ENCODE measurements at regions of chr2 and their contacts with region 1.

Region 1: DNA sequence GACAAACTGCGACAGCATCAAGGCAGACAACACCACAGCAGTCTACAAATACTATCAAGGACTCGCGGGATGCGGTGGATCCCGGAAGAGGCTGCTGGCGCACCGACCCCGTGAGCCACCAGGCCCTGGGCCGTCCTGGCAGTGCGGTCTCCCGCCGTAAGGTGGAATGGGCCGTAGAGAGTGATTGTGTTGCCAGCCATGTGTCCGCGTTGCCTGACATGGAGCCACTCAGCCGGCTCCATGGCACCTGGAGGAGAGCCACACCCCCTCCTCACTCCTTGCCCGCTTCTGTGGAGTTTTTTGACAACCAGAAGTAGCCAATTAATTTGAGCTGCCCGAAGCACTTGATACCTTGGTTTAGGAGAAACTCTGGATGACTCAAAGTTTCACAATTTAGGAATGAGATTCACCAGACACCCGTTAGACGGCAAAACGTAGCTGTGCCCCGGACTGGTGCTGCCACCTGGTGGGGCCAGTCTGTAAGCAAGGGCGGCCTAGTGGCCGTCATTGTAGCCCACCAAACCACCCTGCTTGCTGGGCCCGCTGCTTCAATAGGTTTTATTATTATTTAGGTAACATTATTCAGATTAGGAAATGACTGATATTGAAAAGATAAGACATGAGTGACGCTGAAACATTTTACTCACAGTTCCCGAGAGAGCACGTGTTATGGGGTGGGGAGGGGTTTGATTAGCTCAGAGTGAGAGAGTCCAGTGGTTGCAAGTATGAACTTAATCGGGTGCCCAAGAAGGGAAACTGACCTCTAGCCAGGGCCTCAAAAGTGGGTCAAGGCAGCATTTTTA is 10.2 kb upstream of the IMP4 start:
- DNase-seq: peak; percentile 88
- H3K4me3 ChIP-seq: peak overlapping the region in 2 of 4 donors; percentile 13 to 15
- H3K27ac ChIP-seq: no peak overlapping the region
- H3K4me1 ChIP-seq: peaks cover 0 to 12% (median 2%) of the 10 kb centered on the region in 4 donors
- H3K27me3 ChIP-seq: no peaks in the 10 kb centered on the region
- CTCF ChIP-seq: peak; percentile 70 to 88 (median 85)
- EP300 ChIP-seq: no peak
- POLR2A ChIP-seq: no peak

Region 2: DNA sequence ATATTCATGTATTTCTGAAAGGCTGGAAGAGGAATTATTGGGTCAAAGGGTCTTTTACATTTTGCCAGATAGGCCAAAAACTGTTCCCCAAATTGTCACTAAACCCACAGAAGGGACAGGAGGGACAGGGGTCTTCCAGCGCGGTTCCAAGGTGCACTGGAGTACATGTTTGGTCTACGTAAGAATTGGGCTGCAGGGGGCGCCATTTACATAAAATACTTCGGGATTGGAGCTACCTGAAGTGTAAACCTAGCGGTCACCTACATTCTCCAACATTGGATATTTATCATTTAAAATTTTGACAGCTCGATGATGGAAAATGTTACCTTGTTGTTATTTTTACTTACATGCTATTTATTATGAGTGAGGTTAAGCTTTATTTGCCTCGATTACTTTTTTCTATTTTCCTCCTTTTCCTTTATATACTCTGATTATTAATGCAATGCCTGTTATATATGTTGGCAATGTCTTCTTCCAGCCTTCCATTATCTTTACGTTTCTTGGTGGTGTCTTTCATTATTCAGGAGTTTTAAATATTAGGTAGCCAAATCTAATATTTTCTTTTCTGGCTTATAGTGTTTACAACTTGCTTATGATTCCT is 396.0 kb before region 1 on chr2:
- intact Hi-C with region 1: loop called (anchors 2 kb)
- DNase-seq: no peak
- H3K4me3 ChIP-seq: no peak overlapping the region
- H3K27ac ChIP-seq: no peak overlapping the region
- H3K4me1 ChIP-seq: no peaks in the 10 kb centered on the region
- H3K27me3 ChIP-seq: peaks cover 3 to 38% (median 6%) of the 10 kb centered on the region in 3 donors
- CTCF ChIP-seq: no peak
- EP300 ChIP-seq: no peak
- POLR2A ChIP-seq: no peak